ENCODE measurements at regions of chr4 and their contacts with region 1.

Region 1: GRCh38 chr4:146342600-146343192 is 128.4 kb downstream of the REELD1 start:
- DNase-seq: no peak
- ATAC-seq: no peak
- H3K4me3 ChIP-seq: no peak overlapping the region
- H3K27ac ChIP-seq: no peak overlapping the region
- H3K4me1 ChIP-seq: no peaks in the 10 kb centered on the region
- H3K27me3 ChIP-seq: no peaks in the 10 kb centered on the region
- CTCF ChIP-seq: peak; percentile 13; the same call in 1 of the 2 replicates

Region 2: DNA sequence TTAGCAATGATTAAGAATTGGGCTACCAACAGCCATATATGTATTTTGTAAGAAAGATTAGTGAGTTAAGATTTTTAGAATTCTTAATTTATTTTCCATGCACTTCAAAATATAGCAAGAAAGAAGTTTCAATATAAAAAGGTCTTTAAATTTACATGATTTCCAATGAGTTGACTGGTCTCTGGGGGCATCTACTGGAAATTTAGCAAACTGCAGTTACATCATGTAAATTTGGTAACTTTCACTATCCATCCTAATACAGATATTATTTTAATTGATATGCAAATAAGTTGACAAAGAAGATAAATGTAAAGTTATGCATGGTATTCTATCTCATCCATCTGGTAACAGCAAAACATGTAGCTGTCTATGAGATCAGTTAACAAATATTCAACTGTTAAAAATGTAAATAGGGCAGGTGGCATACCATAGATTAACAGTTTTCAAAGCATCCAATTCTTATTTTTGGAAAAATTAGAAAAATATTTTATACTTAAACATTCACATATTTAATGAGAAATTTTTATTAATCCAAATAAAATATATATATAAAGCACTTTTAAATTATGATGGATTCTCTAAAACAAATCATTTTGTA is 573.9 kb after region 1 on chr4:
- CTCF ChIA-PET with region 1: no interaction called
- POLR2A ChIA-PET with region 1: no interaction called
- in situ Hi-C with region 1: no loop called
- intact Hi-C with region 1: loop called (anchors 1 kb)
- DNase-seq: peak; percentile 8
- ATAC-seq: no peak
- H3K4me3 ChIP-seq: no peak overlapping the region
- H3K27ac ChIP-seq: no peak overlapping the region
- H3K4me1 ChIP-seq: no peaks in the 10 kb centered on the region
- H3K27me3 ChIP-seq: no peaks in the 10 kb centered on the region
- CTCF ChIP-seq: peak; percentile 66; the same call in 1 of the 2 replicates

Region 3: GRCh38 chr4:147096667-147097604 is 754.2 kb after region 1 on chr4:
- CTCF ChIA-PET with region 1: no interaction called
- POLR2A ChIA-PET with region 1: no interaction called
- in situ Hi-C with region 1: no loop called
- intact Hi-C with region 1: loop called (anchors 5 kb)
- DNase-seq: no peak
- ATAC-seq: no peak
- H3K4me3 ChIP-seq: no peak overlapping the region
- H3K27ac ChIP-seq: no peak overlapping the region
- H3K4me1 ChIP-seq: no peaks in the 10 kb centered on the region
- H3K27me3 ChIP-seq: no peaks in the 10 kb centered on the region
- CTCF ChIP-seq: peak; percentile 50; the same call in 1 of the 2 replicates

Measured in Panc1 (cell line).